Right ventricle myocardium superior (tissue), 1 donor: ENCODE measurements at regions of chr5 and their contacts with region 1.

Region 1: DNA sequence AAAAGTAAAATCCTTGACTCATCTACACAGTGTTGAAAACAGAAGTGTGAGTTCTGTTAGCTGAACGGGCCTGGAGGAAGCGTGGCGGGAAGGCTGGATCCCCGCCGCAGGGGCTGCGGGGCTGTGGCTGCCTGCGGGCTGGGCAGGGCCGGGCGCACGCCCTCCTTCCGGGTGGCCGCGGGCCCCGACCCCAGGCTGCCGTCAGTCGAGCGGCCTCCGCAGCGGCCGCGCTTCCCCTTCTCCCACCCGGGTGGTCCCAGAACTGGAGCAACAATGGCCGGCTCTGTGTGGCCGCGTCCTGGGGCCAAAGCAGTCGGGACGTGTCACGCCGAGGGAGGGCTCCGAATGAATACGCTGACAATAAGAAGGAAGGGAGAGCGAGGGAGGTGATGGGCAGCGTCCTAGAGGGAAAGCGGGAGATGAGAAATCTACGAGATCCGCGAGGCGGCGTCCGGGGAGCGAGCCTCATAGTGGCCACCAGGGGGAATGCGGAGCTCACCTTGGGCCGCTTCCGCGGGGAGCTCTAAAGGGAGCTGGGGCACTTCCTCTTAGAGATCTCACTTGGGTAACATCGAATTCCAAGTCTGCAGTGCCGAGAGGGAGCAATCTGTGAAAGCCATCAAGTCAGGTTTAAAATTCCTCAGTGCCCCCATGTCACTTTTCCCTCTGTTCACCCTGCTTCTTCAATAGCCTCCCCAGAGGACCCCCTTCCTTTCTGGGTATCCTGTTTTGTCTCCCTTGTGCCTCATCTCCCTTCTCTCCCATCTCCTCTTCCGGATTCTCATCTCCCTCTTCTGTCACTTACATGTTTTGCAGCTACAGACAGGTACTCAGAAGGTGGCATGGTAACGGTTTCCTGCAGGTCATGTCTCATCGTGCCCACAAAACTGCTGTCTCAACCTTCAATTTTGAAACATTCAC is 83.9 kb downstream of the SLC1A3 start:
- DNase-seq: peak; percentile 90
- ATAC-seq: peak; percentile 78

Region 2: GRCh38 chr5:36444582-36445418 is 245.5 kb before region 1 on chr5:
- intact Hi-C with region 1: no loop called
- DNase-seq: peak; percentile 57
- ATAC-seq: peak; percentile 56

Region 3: GRCh38 chr5:36507332-36507952 is 182.9 kb before region 1 on chr5:
- intact Hi-C with region 1: loop called (anchors 10 kb)
- DNase-seq: peak; percentile 82
- ATAC-seq: peak; percentile 77

Region 4: GRCh38 chr5:36552626-36553393 is 137.5 kb before region 1 on chr5:
- intact Hi-C with region 1: no loop called
- DNase-seq: peak; percentile 50
- ATAC-seq: peak; percentile 85

Region 5: GRCh38 chr5:36606428-36607113 is 83.7 kb before region 1 on chr5 and contains the start of gene SLC1A3:
- intact Hi-C with region 1: loop called (anchors 5 kb)
- DNase-seq: peak; percentile 66
- ATAC-seq: peak; percentile 87
- total RNA-seq, gene SLC1A3: 93.8 TPM

Region 6: DNA sequence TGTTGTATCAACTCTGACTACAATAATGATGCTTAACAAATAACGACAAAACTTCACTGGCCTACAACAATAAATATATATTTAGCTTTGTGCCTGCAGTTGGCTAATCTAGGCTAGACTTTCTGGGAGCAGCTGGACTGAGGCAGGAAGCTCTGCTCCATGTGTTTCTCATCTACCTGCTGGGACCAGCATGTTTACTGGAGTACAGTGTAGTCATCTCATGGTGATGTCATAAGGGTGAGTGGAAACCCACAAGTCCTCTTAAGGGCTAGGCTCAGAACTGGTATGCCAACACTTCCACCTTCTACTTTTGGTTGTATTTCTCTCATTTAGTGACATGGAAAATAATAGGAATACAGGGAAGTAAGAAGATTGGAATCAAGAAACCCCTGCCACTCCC is 100.5 kb after region 1 on chr5:
- intact Hi-C with region 1: no loop called
- DNase-seq: no peak
- ATAC-seq: no peak